ENCODE measurements at regions of chr10 and their contacts with region 1.

Region 1: DNA sequence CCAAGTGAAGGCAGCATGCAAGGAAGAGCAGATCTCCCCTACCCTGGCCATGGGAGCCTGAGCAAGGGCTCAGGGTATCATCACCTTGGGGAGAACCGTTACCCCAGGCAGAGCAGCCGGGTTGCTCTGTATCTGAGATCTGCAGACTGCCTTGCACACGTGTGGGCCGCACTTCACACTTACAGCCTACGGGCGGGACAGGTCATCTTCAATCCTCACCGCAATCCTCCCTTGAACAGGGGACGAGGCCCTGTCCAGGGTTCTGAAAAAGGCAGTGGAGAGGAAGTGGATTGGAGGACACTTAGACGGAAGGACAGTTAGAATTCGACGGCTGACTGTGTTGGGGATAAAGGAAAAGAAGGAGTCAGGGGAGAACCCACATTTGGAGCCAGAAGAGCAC is 51.4 kb downstream of the NPS start:
- DNase-seq: no peak
- H3K4me3 ChIP-seq: no peak overlapping the region
- H3K27ac ChIP-seq: no peak overlapping the region
- H3K4me1 ChIP-seq: no peaks in the 10 kb centered on the region
- H3K27me3 ChIP-seq: no peaks in the 10 kb centered on the region
- CTCF ChIP-seq: no peak

Region 2: GRCh38 chr10:127702271-127702670 is 101.8 kb after region 1 on chr10:
- CTCF ChIA-PET with region 1: no interaction called
- dilution Hi-C with region 1: loop called (anchors 5 kb)
- in situ Hi-C with region 1: no loop called
- intact Hi-C with region 1: no loop called
- DNase-seq: no peak
- H3K4me3 ChIP-seq: no peak overlapping the region
- H3K27ac ChIP-seq: no peak overlapping the region
- H3K4me1 ChIP-seq: no peaks in the 10 kb centered on the region
- H3K27me3 ChIP-seq: no peaks in the 10 kb centered on the region
- CTCF ChIP-seq: no peak